Endothelial cell of umbilical vein (primary cell): ENCODE measurements at regions of chr17 and their contacts with region 1.

Region 1: DNA sequence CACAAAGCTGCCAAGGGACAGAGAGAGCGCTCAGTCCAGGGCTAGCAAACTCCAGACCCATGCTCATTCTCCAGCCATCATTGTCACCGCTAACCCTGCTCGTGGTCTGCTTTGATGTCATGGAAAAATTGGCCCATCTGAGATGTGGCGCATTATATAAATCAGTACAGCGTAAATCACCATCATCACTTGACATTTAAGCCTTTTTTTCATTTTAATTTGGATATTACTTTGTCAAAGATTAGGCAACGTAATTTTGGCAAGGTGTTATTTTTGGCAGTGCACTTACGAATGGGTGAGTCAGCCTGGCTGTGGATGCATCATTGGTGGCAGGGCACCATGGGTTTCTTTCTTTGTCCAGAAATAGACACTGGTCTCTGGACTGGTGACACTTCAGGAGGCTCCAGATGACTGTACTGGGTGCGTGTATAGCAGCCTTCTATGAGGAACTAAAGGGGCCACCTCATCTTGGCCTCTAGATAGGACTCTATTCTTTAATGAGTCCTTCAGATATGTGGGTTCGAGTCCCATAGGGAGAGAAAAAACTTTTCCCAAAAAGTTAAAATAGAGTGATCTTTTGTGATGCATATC is 166.3 kb downstream of the MSI2 start:
- DNase-seq: no peak
- H3K4me3 ChIP-seq: no peak overlapping the region
- H3K27ac ChIP-seq: no peak overlapping the region
- H3K4me1 ChIP-seq: peaks cover 23% of the 10 kb centered on the region
- H3K27me3 ChIP-seq: no peaks in the 10 kb centered on the region
- CTCF ChIP-seq: no peak
- POLR2A ChIP-seq: no peak

Region 2: GRCh38 chr17:57379237-57379894 is 43.3 kb before region 1 on chr17:
- CTCF ChIA-PET with region 1: no interaction called
- POLR2A ChIA-PET with region 1: no interaction called
- dilution Hi-C with region 1: no loop called
- intact Hi-C with region 1: loop called (anchors 5 kb)
- DNase-seq: peak; percentile 67
- H3K4me3 ChIP-seq: no peak overlapping the region
- H3K27ac ChIP-seq: peak overlapping the region; percentile 33
- H3K4me1 ChIP-seq: peaks cover 5% of the 10 kb centered on the region
- H3K27me3 ChIP-seq: no peaks in the 10 kb centered on the region
- CTCF ChIP-seq: no peak
- POLR2A ChIP-seq: no peak

Region 3: GRCh38 chr17:57440522-57441485 is 18.1 kb after region 1 on chr17:
- CTCF ChIA-PET with region 1: interaction called, 5 read pairs
- POLR2A ChIA-PET with region 1: no interaction called
- dilution Hi-C with region 1: no loop called
- intact Hi-C with region 1: loop called (anchors 1 kb)
- DNase-seq: peak; percentile 55
- H3K4me3 ChIP-seq: no peak overlapping the region
- H3K27ac ChIP-seq: no peak overlapping the region
- H3K4me1 ChIP-seq: peaks cover 21% of the 10 kb centered on the region
- H3K27me3 ChIP-seq: no peaks in the 10 kb centered on the region
- CTCF ChIP-seq: peak; percentile 43 to 58
- POLR2A ChIP-seq: no peak